WTC11 (cell line): ENCODE measurements at regions of chr17 and their contacts with region 1.

Region 1: GRCh38 chr17:8079291-8080207 is 8.0 kb downstream of the ALOX12B start:
- DNase-seq: peak; percentile 86
- ATAC-seq: peak; percentile 82
- H3K4me3 Mint-ChIP-seq: peak overlapping the region; percentile 87
- H3K27ac Mint-ChIP-seq: no peak overlapping the region
- H3K4me1 Mint-ChIP-seq: peaks cover 15% of the 10 kb centered on the region
- H3K27me3 Mint-ChIP-seq: peaks cover 84% of the 10 kb centered on the region
- CTCF ChIP-seq: peak; percentile 85

Region 2: GRCh38 chr17:8025176-8025911 is 54.2 kb before region 1 on chr17:
- CTCF ChIA-PET with region 1: no interaction called
- POLR2A ChIA-PET with region 1: no interaction called
- DNase-seq: no peak
- ATAC-seq: no peak
- H3K4me3 Mint-ChIP-seq: no peak overlapping the region
- H3K27ac Mint-ChIP-seq: no peak overlapping the region
- H3K4me1 Mint-ChIP-seq: peaks cover 5% of the 10 kb centered on the region
- H3K27me3 Mint-ChIP-seq: peaks cover 17% of the 10 kb centered on the region
- CTCF ChIP-seq: no peak

Region 3: DNA sequence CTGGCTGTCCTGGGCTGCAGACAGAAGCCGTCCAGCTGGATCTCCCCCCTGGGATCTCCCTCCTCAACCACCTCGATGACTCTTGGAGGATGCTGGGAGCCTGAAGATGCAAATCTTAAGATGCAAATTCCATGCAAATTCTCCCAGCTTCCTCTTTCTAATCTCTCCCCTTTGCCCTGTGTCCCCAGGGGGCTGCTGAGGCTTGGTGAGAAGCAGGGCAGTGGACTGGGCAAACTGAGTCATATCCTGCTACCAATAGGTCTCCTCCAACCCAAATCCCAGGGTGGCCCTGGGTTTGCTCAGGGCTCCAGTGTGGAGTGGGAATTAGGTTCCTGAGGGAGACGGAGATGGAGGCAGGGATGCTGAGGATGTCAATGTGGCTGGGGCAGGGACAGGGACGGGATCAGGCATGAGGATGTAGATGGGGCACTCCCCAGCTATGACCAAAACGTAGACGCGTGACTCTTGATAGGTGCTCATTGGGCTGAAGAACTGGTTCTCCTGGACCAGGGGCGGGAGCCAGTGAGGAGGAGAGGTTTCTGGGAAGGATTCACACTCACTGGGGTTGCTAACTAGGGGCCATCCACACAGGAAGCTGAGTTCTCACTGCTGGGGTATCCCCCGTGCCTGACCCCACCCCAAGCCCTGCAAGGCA is 11.6 kb after region 1 on chr17:
- CTCF ChIA-PET with region 1: interaction called, 91 read pairs
- POLR2A ChIA-PET with region 1: no interaction called
- DNase-seq: no peak
- ATAC-seq: no peak; the same call in 1 of the 2 replicates
- H3K4me3 Mint-ChIP-seq: no peak overlapping the region
- H3K27ac Mint-ChIP-seq: no peak overlapping the region
- H3K4me1 Mint-ChIP-seq: peaks cover 16% of the 10 kb centered on the region
- H3K27me3 Mint-ChIP-seq: peaks cover 34% of the 10 kb centered on the region
- CTCF ChIP-seq: no peak

Region 4: GRCh38 chr17:8109661-8110464 is 30.3 kb after region 1 on chr17:
- CTCF ChIA-PET with region 1: interaction called, 134 read pairs
- POLR2A ChIA-PET with region 1: no interaction called
- DNase-seq: peak; percentile 90
- ATAC-seq: peak; percentile 87
- H3K4me3 Mint-ChIP-seq: peak overlapping the region; percentile 71
- H3K27ac Mint-ChIP-seq: no peak overlapping the region
- H3K4me1 Mint-ChIP-seq: peaks cover 4% of the 10 kb centered on the region; the same call in 1 of the 2 replicates
- H3K27me3 Mint-ChIP-seq: peaks cover 79% of the 10 kb centered on the region
- CTCF ChIP-seq: peak; percentile 85

Region 5: DNA sequence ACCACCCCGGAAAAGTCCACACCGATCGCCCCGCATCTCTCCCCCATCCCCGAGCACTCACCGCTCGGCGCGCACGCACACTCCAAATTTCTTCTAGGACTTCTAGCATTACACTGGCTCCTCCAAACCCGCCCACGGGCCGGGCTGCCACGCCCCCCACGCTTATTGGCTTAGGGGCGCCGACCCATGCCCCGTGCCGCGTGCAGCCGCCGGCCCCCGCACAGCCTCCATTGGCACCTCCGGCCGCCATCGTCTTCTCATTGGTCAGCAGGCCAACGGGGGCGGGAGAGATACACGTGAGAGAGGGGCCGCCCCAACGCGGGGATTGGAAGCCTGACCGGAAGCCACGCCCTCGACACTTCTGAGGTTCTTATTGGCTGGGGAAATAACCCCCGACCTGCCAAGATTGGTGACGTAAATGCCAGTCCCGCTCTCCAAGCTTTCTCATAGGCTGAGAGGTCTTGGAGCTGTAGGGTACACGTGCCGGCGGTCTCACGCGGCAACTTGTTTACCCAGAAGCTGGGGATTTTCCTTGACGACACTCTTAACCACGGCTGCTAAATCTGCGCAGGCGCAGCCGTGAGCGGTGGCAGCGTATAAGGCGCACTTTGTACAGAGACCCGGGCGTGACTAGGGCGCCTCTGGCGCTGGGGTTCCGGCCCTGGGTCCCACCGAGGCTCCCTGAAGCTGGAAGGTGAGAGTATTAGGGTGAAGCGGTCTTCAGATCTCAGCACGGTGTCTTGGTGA is 76.9 kb after region 1 on chr17:
- CTCF ChIA-PET with region 1: interaction called, 13 read pairs
- POLR2A ChIA-PET with region 1: no interaction called
- DNase-seq: peak; percentile 100
- ATAC-seq: peak; percentile 67
- H3K4me3 Mint-ChIP-seq: no peak overlapping the region
- H3K27ac Mint-ChIP-seq: no peak overlapping the region
- H3K4me1 Mint-ChIP-seq: peaks cover 32% of the 10 kb centered on the region
- H3K27me3 Mint-ChIP-seq: peaks cover 3% of the 10 kb centered on the region; the same call in 1 of the 2 replicates
- CTCF ChIP-seq: no peak